Panc1 (cell line): ENCODE measurements at regions of chr10 and their contacts with region 1.

Region 1: GRCh38 chr10:97411406-97411805 is 10.3 kb upstream of the RRP12 start:
- DNase-seq: no peak
- ATAC-seq: no peak
- H3K4me3 ChIP-seq: no peak overlapping the region
- H3K27ac ChIP-seq: no peak overlapping the region
- H3K4me1 ChIP-seq: no peaks in the 10 kb centered on the region
- H3K27me3 ChIP-seq: no peaks in the 10 kb centered on the region
- CTCF ChIP-seq: no peak

Region 2: DNA sequence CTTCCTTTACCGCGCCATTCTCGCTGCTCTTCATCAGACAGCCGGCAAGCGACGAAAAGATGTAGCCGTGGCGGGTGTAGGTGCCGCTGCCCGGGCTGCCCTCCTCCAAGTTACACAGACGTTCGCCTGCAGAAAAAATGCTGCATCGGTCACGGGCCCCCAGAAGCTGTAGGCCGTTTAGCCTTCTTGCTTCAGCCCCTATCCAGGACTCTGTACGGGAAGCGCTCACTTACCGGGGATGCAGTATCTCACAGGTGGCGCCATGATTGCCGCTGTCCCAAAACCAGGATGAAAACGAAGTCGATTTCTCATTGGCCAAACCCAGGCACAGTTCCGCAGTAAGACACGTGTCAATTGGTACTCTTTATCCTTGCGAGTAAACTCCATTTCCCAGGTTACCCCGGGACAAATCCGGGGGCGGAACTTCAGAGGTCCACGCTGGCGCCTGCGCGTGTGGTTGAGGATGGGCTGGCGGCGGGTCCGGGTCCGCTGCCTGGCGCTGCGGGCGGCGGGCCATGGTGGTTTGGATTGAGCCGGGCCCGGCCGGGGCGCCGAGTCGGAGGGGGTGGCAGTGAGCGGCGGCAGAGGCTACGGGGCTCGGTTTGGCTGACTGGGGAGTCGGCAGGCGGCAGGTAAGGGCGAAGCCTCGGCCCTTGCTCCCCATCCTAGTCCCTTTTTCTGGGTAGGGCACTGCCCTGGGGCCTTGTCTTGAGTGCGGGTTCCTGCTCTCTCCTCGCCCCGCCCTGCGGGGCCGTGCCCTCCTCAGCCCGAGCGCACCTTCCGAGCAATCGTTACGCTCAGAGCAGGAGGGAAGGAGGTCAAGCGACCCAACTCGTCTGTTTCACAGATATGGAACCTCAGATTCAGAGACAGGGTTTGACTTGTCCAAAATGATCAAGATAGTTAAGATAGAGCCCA is 34.6 kb after region 1 on chr10 and contains the starts of genes EXOSC1 and ZDHHC16:
- CTCF ChIA-PET with region 1: interaction called, 10 read pairs
- POLR2A ChIA-PET with region 1: no interaction called
- in situ Hi-C with region 1: no loop called
- intact Hi-C with region 1: no loop called
- DNase-seq: peak; percentile 93
- ATAC-seq: peak; percentile 99
- H3K4me3 ChIP-seq: peak within 1 kb of the TSS; percentile 75 to 90
- H3K27ac ChIP-seq: peak within 1 kb of the TSS; percentile 90
- H3K4me1 ChIP-seq: peaks cover 20% of the 10 kb centered on the region
- H3K27me3 ChIP-seq: no peaks in the 10 kb centered on the region
- CTCF ChIP-seq: no peak
- total RNA-seq, gene EXOSC1: 60.3 TPM
- total RNA-seq, gene ZDHHC16: 64.5 TPM

Region 3: DNA sequence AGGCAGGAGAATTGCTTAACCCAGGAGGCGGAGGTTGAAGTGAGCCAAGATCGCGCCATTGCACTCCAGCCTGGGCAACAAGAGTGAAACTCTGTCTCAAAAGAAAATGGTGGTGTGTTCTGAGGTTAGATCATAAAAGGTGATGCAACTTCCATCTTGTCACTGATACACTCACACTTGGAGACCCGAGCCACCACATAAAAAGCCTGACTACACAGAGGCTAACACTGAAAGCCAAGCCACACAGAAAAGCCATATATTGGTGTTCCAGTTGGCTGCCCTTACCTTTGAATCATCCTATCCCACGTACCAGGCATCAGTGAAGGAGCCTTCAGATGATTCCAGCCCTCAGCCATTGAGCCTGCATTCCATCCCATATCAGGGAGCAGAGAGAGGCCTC is 217.9 kb after region 1 on chr10:
- CTCF ChIA-PET with region 1: interaction called, 21 read pairs
- POLR2A ChIA-PET with region 1: no interaction called
- in situ Hi-C with region 1: no loop called
- intact Hi-C with region 1: no loop called
- DNase-seq: no peak
- ATAC-seq: no peak
- H3K4me3 ChIP-seq: no peak overlapping the region
- H3K27ac ChIP-seq: no peak overlapping the region
- H3K4me1 ChIP-seq: peaks cover 7% of the 10 kb centered on the region; the same call in 1 of the 2 replicates
- H3K27me3 ChIP-seq: no peaks in the 10 kb centered on the region
- CTCF ChIP-seq: no peak